ENCODE measurements at regions of chr3 and their contacts with region 1.

Region 1: GRCh38 chr3:33023172-33024136 is 72.0 kb downstream of the CCR4 start:
- DNase-seq: no peak
- H3K4me3 Mint-ChIP-seq: peak overlapping the region; percentile 59
- H3K27ac Mint-ChIP-seq: peak overlapping the region; percentile 95
- H3K4me1 Mint-ChIP-seq: peaks cover 48% of the 10 kb centered on the region
- H3K27me3 Mint-ChIP-seq: no peaks in the 10 kb centered on the region

Region 2: GRCh38 chr3:32872487-32873382 is 150.7 kb before region 1 on chr3:
- intact Hi-C with region 1: no loop called
- DNase-seq: no peak
- H3K4me3 Mint-ChIP-seq: no peak overlapping the region
- H3K27ac Mint-ChIP-seq: no peak overlapping the region
- H3K4me1 Mint-ChIP-seq: no peaks in the 10 kb centered on the region
- H3K27me3 Mint-ChIP-seq: peaks cover 27% of the 10 kb centered on the region

Region 3: GRCh38 chr3:32960404-32961170 is 62.9 kb before region 1 on chr3:
- intact Hi-C with region 1: loop called (anchors 1 kb)
- DNase-seq: no peak
- H3K4me3 Mint-ChIP-seq: peak overlapping the region; percentile 68
- H3K27ac Mint-ChIP-seq: peak overlapping the region; percentile 96
- H3K4me1 Mint-ChIP-seq: peaks cover 46% of the 10 kb centered on the region
- H3K27me3 Mint-ChIP-seq: no peaks in the 10 kb centered on the region

Region 4: DNA sequence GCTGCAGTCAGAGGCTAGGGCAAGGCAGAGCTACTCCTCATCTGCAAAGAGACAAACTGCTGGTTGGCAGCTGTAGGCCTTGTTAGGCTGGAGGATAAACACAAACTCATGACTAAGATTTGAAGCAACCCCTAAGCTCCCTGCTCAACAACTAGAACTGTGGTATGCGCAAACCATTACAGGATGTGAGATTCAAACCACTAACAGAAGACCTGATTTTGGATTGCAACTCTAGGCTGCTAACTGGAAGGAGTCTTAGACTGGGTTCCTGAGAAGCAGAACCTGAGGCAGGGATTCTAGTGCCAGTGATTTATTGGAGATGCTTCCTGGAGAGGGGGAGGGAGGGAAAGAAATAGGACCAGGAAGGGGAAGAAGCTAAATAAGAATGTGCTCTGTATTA is 49.5 kb before region 1 on chr3:
- intact Hi-C with region 1: loop called (anchors 1 kb)
- DNase-seq: peak; percentile 85
- H3K4me3 Mint-ChIP-seq: peak overlapping the region; percentile 33
- H3K27ac Mint-ChIP-seq: peak overlapping the region; percentile 46
- H3K4me1 Mint-ChIP-seq: peaks cover 37% of the 10 kb centered on the region
- H3K27me3 Mint-ChIP-seq: no peaks in the 10 kb centered on the region

Region 5: DNA sequence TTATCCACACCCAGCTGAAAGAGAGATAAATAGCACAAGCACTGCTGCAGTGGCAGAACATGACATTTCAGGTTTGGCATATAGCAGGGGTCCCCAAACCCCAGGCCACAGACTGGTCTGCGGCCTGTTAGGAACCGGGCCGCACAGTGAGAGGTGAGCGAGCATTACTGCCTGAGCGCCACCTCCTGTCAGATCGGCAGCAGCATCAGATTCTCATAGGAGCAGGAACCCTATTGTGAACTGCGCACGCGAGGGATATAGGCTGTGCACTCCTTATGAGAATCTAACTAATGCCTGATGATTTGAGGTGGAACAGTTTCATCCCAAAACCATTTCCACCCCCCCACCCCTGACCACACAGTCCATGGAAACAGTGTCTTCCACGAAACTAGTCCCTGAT is 17.4 kb before region 1 on chr3:
- intact Hi-C with region 1: loop called (anchors 1 kb)
- DNase-seq: no peak
- H3K4me3 Mint-ChIP-seq: no peak overlapping the region
- H3K27ac Mint-ChIP-seq: peak overlapping the region; percentile 48
- H3K4me1 Mint-ChIP-seq: peaks cover 40% of the 10 kb centered on the region
- H3K27me3 Mint-ChIP-seq: no peaks in the 10 kb centered on the region

Region 6: DNA sequence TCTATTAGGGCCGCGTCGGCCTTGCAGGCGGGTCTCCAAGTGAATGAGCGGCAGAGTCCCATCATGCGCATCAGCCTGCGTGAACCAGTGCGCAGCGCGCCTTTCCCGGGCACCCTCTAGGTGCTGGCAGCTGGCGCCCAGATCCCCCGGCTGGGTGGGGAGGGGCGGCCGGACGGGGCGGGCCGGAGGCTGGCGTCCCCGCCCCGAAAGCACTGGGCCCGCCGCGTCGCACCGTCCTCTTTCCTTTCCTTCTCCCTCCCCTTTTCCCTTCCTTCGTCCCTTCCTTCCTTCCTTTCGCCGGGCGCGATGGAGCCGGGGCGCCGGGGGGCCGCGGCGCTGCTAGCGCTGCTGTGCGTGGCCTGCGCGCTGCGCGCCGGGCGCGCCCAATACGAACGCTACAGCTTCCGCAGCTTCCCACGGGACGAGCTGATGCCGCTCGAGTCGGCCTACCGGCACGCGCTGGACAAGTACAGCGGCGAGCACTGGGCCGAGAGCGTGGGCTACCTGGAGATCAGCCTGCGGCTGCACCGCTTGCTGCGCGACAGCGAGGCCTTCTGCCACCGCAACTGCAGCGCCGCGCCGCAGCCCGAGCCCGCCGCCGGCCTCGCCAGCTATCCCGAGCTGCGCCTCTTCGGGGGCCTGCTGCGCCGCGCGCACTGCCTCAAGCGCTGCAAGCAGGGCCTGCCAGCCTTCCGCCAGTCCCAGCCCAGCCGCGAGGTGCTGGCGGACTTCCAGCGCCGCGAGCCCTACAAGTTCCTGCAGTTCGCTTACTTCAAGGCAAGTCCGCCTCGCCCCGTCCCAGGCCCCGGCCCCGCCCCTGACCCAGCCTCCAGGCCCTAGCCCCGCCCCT is 90.5 kb after region 1 on chr3 and contains the start of gene CRTAP:
- intact Hi-C with region 1: loop called (anchors 5 kb)
- DNase-seq: peak; percentile 95
- H3K4me3 Mint-ChIP-seq: peak within 1 kb of the TSS; percentile 84
- H3K27ac Mint-ChIP-seq: peak within 1 kb of the TSS; percentile 81
- H3K4me1 Mint-ChIP-seq: peaks cover 16% of the 10 kb centered on the region
- H3K27me3 Mint-ChIP-seq: peaks cover 2% of the 10 kb centered on the region
- total RNA-seq, gene CRTAP: 33.1 and 34.2 TPM in 2 replicates

Measured in activated CD4-positive, alpha-beta T cell treated with anti-CD3 and anti-CD28 coated beads, Interleukin-2, amount 10 ng/mL, durations not matched to agents 24 days and 14 days (primary cell).